GM18951 (cell line): ENCODE measurements at regions of chr4 and their contacts with region 1.

Region 1: DNA sequence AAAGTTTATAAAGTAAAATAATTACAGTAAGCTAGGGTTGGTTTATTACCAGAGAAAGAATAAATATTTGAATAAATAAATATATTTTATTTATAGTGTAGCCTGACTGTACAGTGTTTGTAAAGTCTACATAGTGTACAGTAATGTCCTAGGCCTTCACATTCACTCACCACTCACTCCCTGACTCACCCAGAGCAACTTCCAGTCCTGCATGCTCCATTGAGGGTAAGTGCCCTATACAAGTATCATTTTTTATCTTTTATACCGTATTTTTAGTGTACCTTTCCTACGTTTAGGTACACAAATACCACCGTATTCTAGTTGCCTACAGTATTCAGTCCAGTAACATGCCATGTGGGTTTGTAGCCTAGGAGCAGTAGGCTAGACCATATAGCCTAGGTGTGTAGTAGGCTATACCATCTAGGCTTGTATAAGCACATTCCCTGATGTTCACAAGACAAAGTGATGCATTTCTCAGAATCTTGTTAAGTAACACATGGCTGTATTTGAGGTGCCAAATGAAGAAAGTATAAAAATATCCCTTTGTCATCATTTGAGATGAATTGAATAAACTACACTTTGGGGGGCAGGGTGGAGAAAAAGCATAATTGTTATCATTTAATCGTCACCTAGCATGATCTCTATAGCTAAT is 14.7 kb upstream of the KLHL8 start:
- POLR2A ChIP-seq: no peak

Region 2: DNA sequence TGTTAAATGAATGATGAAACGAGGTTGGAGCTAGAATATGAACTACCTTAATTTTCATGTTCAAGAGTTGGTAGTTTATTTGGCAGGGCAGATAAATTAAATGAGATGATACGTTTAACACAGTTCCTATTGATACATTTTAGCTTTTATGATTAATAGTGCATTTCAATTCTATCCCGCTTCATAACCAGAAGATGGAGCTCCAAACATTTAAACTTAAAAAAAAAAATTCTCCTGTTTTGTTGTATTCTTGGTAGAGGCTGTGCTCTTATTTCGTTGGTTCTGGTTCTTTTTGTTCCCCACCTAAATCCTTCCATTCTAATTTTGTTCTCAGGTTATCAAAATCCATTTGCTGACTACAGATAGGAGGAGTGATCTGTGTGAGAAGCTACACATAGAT is 712.8 kb before region 1 on chr4:
- in situ Hi-C with region 1: no loop called
- POLR2A ChIP-seq: no peak

Region 3: DNA sequence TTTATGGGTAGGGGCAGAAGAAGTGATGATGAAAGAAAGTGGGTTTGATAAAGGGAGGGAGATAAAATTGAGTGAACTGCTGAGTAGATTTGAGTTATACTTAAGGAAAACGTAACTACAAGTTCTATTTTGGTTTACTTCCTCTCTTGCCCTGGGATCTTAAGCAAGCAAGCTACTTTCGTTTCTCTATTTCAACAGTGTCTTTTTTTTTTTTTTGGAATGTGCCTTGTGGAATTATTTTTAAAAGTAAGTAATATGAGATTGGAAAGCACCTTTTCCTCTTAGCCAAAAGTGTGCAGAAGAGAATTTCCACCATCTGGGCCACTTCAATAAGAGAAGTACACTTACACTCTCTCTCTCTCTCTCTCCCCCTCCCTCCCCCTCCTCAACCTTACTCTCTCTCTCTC is 326.9 kb before region 1 on chr4:
- in situ Hi-C with region 1: loop called (anchors 25 kb)
- POLR2A ChIP-seq: no peak

Region 4: DNA sequence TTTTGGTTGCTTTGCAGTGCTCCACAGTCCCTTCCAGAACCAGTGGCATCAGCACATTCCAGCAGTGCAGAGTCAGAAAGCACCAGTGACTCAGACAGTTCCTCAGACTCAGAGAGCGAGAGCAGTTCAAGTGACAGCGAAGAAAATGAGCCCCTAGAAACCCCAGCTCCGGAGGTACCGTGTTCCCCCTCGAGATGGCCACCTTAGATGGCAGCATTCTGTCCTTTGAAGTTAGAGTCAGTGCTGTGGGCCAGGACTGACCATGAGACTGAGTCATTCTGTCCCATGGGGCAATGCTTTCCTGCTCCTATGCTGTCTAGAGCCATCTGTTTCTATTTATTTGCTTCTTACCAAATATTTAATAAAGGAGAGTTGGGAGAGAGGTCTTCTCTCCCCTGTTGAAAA is 127.0 kb before region 1 on chr4:
- in situ Hi-C with region 1: no loop called
- POLR2A ChIP-seq: no peak

Region 5: DNA sequence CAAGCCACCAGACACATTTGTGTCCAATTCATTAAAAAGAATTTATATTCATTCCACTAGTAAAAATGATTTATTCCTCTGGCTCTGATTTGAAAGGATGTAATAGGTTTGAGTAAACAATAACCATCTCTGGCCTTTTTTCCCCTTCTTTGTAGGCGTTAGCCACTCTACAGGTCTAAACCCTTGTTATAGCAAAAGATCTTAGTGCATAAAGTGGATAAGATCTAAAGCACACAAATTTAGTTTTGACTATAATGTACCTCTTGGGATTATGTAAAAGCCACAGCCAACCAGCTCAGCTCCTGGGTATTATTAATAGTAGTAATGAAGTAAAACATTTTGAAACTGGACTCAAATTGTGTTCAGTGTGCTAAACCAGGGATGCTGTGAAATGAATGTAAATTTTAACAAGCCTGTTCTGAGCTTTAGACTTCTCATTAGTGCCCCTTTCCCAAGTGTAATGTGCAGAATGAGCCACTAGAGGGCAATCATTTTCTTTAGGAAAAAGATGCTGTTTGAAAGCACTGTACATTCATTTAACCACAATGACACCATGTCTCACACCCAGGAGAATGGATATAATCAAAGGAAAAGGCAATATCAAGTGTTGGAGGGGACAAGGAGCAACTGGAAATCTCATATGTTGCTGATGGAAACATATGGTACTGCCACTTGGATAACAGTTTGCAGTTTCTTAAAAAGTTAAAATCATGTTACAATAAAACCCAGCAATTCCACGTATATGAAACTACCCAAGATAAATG is 84.5 kb before region 1 on chr4:
- in situ Hi-C with region 1: loop called (anchors 10 kb)
- POLR2A ChIP-seq: no peak